Mammary epithelial cell (primary cell): ENCODE measurements at regions of chr3 and their contacts with region 1.

Region 1: DNA sequence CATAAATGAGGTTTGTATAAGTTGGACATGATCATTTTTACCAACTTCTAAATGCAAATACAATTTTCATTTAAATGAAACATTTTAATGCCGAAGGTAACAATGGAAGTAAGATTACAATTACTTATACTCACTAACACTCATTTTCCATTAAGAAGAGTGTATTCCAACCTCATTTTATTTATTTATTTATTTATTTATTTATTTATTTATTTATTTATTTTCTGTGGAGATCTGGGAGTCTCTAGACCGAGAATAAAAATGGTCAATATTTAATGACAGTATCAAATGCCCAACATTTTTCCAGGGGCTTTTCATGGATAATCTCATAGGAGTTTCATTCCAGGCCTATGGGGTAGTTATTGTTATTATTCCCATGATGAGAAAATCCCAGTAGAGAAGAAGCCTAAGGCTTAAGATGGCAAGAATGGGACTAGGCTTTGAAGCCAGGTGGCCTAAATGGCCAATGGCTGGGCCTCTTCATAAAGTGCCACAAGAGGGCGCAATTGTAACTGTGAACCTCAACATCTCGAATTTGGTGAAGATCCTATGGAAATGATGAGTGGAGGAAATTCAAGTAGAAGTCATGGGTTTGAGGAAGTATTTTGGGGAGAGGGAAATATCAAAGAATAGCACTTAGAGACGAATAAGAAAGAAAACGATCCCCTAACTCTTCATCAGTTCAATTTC is 21.3 kb downstream of the VGLL3 start:
- DNase-seq: peak; percentile 46
- H3K4me3 ChIP-seq: no peak overlapping the region
- H3K27ac ChIP-seq: no peak overlapping the region
- H3K4me1 ChIP-seq: peaks cover 11% of the 10 kb centered on the region
- H3K27me3 ChIP-seq: no peaks in the 10 kb centered on the region
- CTCF ChIP-seq: peak; percentile 78 to 85

Region 2: GRCh38 chr3:86793786-86794185 is 175.9 kb before region 1 on chr3:
- CTCF ChIA-PET with region 1: no interaction called
- dilution Hi-C with region 1: no loop called
- in situ Hi-C with region 1: loop called in 1 of 2 experiments (anchors 25 kb)
- intact Hi-C with region 1: no loop called
- DNase-seq: peak; percentile 86
- H3K4me3 ChIP-seq: no peak overlapping the region
- H3K27ac ChIP-seq: peak overlapping the region; percentile 78
- H3K4me1 ChIP-seq: peaks cover 13% of the 10 kb centered on the region
- H3K27me3 ChIP-seq: no peaks in the 10 kb centered on the region
- CTCF ChIP-seq: no peak

Region 3: DNA sequence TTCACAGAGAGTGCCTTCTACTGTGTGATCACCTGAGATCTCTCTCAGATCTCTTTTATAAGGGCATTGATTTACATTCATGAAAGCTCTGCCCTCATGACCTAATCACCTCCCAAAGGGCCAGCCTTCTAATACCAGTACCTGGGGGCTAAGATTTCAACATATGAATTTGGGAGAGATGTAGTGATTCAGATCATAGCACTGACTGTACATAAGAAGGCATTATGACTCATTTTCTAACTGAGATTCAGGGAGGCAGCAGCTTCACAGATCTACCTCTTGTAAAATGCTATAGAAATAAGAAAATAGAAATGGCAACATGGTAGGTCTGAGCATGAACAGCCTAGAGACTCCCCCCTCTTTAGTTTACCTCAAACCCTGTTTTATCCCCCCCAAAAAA is 18.3 kb before region 1 on chr3:
- CTCF ChIA-PET with region 1: interaction called, 5 read pairs
- dilution Hi-C with region 1: no loop called
- in situ Hi-C with region 1: no loop called
- intact Hi-C with region 1: loop called (anchors 2 kb)
- DNase-seq: peak; percentile 88
- H3K4me3 ChIP-seq: no peak overlapping the region
- H3K27ac ChIP-seq: peak overlapping the region; percentile 43
- H3K4me1 ChIP-seq: peaks cover 39% of the 10 kb centered on the region
- H3K27me3 ChIP-seq: no peaks in the 10 kb centered on the region
- CTCF ChIP-seq: no peak

Region 4: GRCh38 chr3:87082796-87083440 is 113.3 kb after region 1 on chr3:
- CTCF ChIA-PET with region 1: no interaction called
- dilution Hi-C with region 1: no loop called
- in situ Hi-C with region 1: no loop called
- intact Hi-C with region 1: loop called (anchors 1 kb)
- DNase-seq: peak; percentile 56
- H3K4me3 ChIP-seq: no peak overlapping the region
- H3K27ac ChIP-seq: no peak overlapping the region
- H3K4me1 ChIP-seq: no peaks in the 10 kb centered on the region
- H3K27me3 ChIP-seq: no peaks in the 10 kb centered on the region
- CTCF ChIP-seq: peak; percentile 54 to 70

Region 5: GRCh38 chr3:87227104-87227834 is 257.6 kb after region 1 on chr3 and contains the start of gene CHMP2B:
- CTCF ChIA-PET with region 1: interaction called, 10 read pairs
- dilution Hi-C with region 1: no loop called
- in situ Hi-C with region 1: no loop called
- intact Hi-C with region 1: no loop called
- DNase-seq: peak; percentile 93
- H3K4me3 ChIP-seq: peak within 1 kb of the TSS; percentile 76 to 81 (median 78)
- H3K27ac ChIP-seq: peak within 1 kb of the TSS; percentile 93
- H3K4me1 ChIP-seq: peaks cover 4% of the 10 kb centered on the region
- H3K27me3 ChIP-seq: no peaks in the 10 kb centered on the region
- CTCF ChIP-seq: no peak
- total RNA-seq, gene CHMP2B: 40.3 to 52.9 TPM